GM12878 (cell line): ENCODE measurements at regions of chr13 and their contacts with region 1.

Region 1: GRCh38 chr13:57624565-57625435 is 6.7 kb upstream of the PCDH17 start:
- DNase-seq: no peak
- ATAC-seq: peak; percentile 72
- H3K4me3 ChIP-seq: no peak overlapping the region
- H3K27ac ChIP-seq: no peak overlapping the region
- H3K4me1 ChIP-seq: no peaks in the 10 kb centered on the region
- H3K27me3 ChIP-seq: no peaks in the 10 kb centered on the region
- CTCF ChIP-seq: peak; percentile 59 to 74 (median 68)
- EP300 ChIP-seq: no peak
- POLR2A ChIP-seq: no peak
- RAD21 ChIP-seq: peak; percentile 65

Region 2: GRCh38 chr13:57588639-57589038 is 36.2 kb before region 1 on chr13:
- CTCF ChIA-PET with region 1: interaction called, 117 read pairs
- POLR2A ChIA-PET with region 1: interaction called, 12 read pairs
- RAD21 ChIA-PET with region 1: interaction called, 102 read pairs
- SMC1A ChIA-PET with region 1: interaction called, 110 read pairs
- in situ Hi-C with region 1: no loop called
- intact Hi-C with region 1: no loop called
- DNase-seq: no peak
- ATAC-seq: no peak
- H3K4me3 ChIP-seq: no peak overlapping the region
- H3K27ac ChIP-seq: no peak overlapping the region
- H3K4me1 ChIP-seq: no peaks in the 10 kb centered on the region
- H3K27me3 ChIP-seq: no peaks in the 10 kb centered on the region
- CTCF ChIP-seq: no peak
- EP300 ChIP-seq: no peak
- POLR2A ChIP-seq: no peak
- RAD21 ChIP-seq: no peak

Region 3: DNA sequence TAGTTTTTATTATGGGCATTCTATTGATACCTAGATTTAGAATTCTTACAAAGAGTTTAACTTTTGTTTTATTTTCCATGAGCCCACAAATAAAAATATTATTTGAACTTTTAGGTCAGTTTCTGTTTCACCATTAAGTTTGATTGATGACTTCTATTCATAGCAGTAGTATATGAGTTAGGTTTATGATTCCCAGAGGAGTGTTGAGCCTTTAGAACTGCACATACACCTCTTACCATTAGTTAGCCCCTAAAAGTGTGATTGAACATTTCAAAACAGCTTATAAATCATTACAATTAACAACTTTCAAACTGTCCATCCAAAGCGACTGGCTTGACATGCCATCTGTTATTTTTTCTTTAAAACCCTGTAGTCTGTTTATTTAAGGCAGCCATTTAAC is 12.2 kb before region 1 on chr13:
- CTCF ChIA-PET with region 1: interaction called, 46 read pairs
- POLR2A ChIA-PET with region 1: no interaction called
- RAD21 ChIA-PET with region 1: interaction called, 28 read pairs
- SMC1A ChIA-PET with region 1: interaction called, 24 read pairs
- in situ Hi-C with region 1: no loop called
- intact Hi-C with region 1: no loop called
- DNase-seq: no peak
- ATAC-seq: peak; percentile 71
- H3K4me3 ChIP-seq: no peak overlapping the region
- H3K27ac ChIP-seq: no peak overlapping the region
- H3K4me1 ChIP-seq: no peaks in the 10 kb centered on the region
- H3K27me3 ChIP-seq: no peaks in the 10 kb centered on the region
- CTCF ChIP-seq: no peak
- EP300 ChIP-seq: no peak
- POLR2A ChIP-seq: no peak
- RAD21 ChIP-seq: no peak

Region 4: GRCh38 chr13:57857945-57858344 is 233.1 kb after region 1 on chr13:
- CTCF ChIA-PET with region 1: interaction called, 8 read pairs
- POLR2A ChIA-PET with region 1: interaction called, 5 read pairs
- RAD21 ChIA-PET with region 1: no interaction called
- SMC1A ChIA-PET with region 1: no interaction called
- in situ Hi-C with region 1: no loop called
- intact Hi-C with region 1: loop called (anchors 10 kb)
- DNase-seq: no peak
- ATAC-seq: no peak
- H3K4me3 ChIP-seq: no peak overlapping the region
- H3K27ac ChIP-seq: no peak overlapping the region
- H3K4me1 ChIP-seq: no peaks in the 10 kb centered on the region
- H3K27me3 ChIP-seq: no peaks in the 10 kb centered on the region
- CTCF ChIP-seq: no peak
- EP300 ChIP-seq: no peak
- POLR2A ChIP-seq: no peak
- RAD21 ChIP-seq: no peak

Region 5: GRCh38 chr13:58960888-58961287 is 1336.1 kb after region 1 on chr13:
- CTCF ChIA-PET with region 1: interaction called, 42 read pairs
- POLR2A ChIA-PET with region 1: no interaction called
- RAD21 ChIA-PET with region 1: interaction called, 27 read pairs
- SMC1A ChIA-PET with region 1: interaction called, 20 read pairs
- in situ Hi-C with region 1: loop called (anchors 25 kb)
- intact Hi-C with region 1: loop called (anchors 2 kb)
- DNase-seq: no peak
- ATAC-seq: peak; percentile 52
- H3K4me3 ChIP-seq: no peak overlapping the region
- H3K27ac ChIP-seq: no peak overlapping the region
- H3K4me1 ChIP-seq: no peaks in the 10 kb centered on the region
- H3K27me3 ChIP-seq: no peaks in the 10 kb centered on the region
- CTCF ChIP-seq: peak in 2 of 3 experiments; percentile 16 to 40; a peak in 2 of 6 replicates
- EP300 ChIP-seq: no peak
- POLR2A ChIP-seq: no peak
- RAD21 ChIP-seq: peak; percentile 49

Region 6: GRCh38 chr13:59318320-59318930 is 1693.6 kb after region 1 on chr13:
- CTCF ChIA-PET with region 1: interaction called, 91 read pairs
- POLR2A ChIA-PET with region 1: no interaction called
- RAD21 ChIA-PET with region 1: interaction called, 14 read pairs
- SMC1A ChIA-PET with region 1: interaction called, 71 read pairs
- in situ Hi-C with region 1: no loop called
- intact Hi-C with region 1: loop called (anchors 1 kb)
- DNase-seq: peak; percentile 9
- ATAC-seq: peak; percentile 82
- H3K4me3 ChIP-seq: no peak overlapping the region
- H3K27ac ChIP-seq: no peak overlapping the region
- H3K4me1 ChIP-seq: no peaks in the 10 kb centered on the region
- H3K27me3 ChIP-seq: no peaks in the 10 kb centered on the region
- CTCF ChIP-seq: peak; percentile 73 to 77 (median 76)
- EP300 ChIP-seq: no peak
- POLR2A ChIP-seq: no peak
- RAD21 ChIP-seq: peak; percentile 74